Left lung (tissue), 14 donors: ENCODE measurements at regions of chr20 and their contacts with region 1.

Region 1: GRCh38 chr20:36555248-36555647 is 13.9 kb downstream of the MYL9 start:
- DNase-seq: no peak
- ATAC-seq: no peak
- H3K4me3 ChIP-seq: no peak overlapping the region
- H3K27ac ChIP-seq: no peak overlapping the region
- H3K4me1 ChIP-seq: peaks cover 0 to 3% of the 10 kb centered on the region in 2 donors
- H3K27me3 ChIP-seq: no peaks in the 10 kb centered on the region
- CTCF ChIP-seq: no peak

Region 2: GRCh38 chr20:36460648-36461599 is 94.3 kb before region 1 on chr20:
- intact Hi-C with region 1: no loop called
- DNase-seq: peak; percentile 93 to 97 (median 96)
- ATAC-seq: peak; percentile 80
- H3K4me3 ChIP-seq: peak overlapping the region; percentile 74 to 79
- H3K27ac ChIP-seq: peak overlapping the region; percentile 92 to 96
- H3K4me1 ChIP-seq: peaks cover 17 to 47% of the 10 kb centered on the region in 2 donors
- H3K27me3 ChIP-seq: no peaks in the 10 kb centered on the region
- CTCF ChIP-seq: no peak

Region 3: DNA sequence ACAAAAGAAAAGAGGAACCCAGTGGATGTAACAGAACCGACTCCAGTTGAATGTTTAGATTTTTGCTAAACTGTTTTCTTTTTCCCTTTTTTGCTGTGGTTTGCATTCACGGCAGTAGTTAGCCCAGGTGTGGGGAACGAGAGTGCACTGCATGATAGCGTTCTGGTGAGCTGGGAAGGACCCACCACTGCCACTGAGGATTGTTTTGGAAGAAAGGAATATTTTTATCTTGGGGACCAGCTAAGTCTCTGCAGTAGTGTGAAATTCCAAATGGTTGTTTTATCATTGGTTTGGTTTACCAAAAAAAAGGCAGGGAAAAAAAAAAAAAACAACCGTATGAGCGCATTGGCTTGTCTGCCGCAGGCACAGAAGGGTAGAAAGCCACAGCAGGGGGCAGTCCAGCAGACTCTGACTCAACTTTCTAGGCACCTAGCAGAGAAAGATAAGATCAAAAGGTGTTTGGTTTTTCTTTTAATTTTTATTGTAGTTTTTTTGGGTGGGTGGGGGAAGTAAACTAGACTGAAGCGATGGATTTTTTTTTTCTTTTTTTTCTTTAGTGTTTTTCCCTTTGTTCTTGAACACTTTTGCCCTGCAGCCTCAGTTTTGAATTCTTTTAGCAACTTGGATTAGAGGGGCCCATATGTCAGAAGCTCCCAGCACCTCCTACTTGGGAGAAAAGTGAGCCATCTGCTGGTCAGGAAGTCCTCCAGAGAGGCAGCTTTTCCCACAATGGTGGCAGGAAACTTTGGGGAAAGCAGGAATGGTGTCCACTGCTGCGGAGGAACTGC is 36.8 kb after region 1 on chr20:
- intact Hi-C with region 1: loop called in 1 of 2 experiments (anchors 5 kb)
- DNase-seq: peak in 1 of 4 donors; percentile 55
- ATAC-seq: peak; percentile 53
- H3K4me3 ChIP-seq: no peak overlapping the region
- H3K27ac ChIP-seq: peak overlapping the region in 1 of 2 donors; percentile 23
- H3K4me1 ChIP-seq: peaks cover 0 to 19% of the 10 kb centered on the region in 2 donors
- H3K27me3 ChIP-seq: no peaks in the 10 kb centered on the region
- CTCF ChIP-seq: peak in 1 of 2 donors; percentile 28

Region 4: DNA sequence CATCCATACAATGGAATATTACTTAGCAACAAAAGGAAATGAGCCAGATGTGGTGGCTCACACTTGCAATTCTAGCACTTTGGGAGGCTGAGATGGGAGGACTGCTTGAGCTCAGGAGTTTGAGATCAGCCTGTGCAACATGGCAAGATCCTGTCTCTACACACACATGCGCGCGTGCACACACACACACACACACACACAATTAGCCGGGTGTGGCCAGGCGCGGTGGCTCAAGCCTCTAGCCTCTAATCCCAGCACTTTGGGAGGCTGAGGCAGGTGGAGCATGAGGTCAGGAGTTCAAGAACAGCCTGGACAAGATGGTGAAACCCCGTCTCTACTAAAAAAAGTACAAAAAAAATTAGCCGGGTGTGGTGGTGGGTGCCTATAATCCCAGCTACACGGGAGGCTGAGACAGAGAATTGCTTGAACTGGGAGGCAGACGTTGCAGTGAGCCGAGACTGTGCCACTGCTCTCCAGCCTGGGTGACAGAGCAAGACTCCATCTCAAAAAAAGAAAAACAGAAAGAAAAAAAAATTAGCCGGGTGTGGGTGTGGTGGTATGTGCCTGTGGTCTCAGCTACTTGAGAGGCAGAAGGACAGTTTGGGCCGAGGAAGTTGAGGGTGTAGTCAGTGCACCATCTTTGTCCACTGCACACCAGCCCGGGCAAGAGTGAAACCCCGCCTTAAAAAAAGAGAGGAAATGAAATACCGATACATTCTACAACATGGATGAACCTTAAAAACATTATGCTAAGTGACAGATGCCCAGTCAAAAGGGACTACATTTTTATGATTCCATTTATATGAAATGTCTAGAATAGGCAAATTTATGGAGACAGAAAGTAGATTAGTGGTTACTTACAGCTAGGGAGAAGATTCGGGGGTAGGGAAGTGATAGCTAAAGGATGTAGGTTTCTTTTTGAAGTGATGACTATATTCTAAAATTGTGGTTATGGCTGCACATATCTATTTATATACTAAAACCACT is 488.0 kb after region 1 on chr20:
- intact Hi-C with region 1: no loop called
- DNase-seq: no peak
- ATAC-seq: peak; percentile 14
- H3K4me3 ChIP-seq: peak overlapping the region in 1 of 2 donors; percentile 1
- H3K27ac ChIP-seq: peak overlapping the region in 1 of 2 donors; percentile 33
- H3K4me1 ChIP-seq: no peaks in the 10 kb centered on the region
- H3K27me3 ChIP-seq: no peaks in the 10 kb centered on the region
- CTCF ChIP-seq: no peak